MCF 10A (cell line): ENCODE measurements at regions of chr2 and their contacts with region 1.

Region 1: DNA sequence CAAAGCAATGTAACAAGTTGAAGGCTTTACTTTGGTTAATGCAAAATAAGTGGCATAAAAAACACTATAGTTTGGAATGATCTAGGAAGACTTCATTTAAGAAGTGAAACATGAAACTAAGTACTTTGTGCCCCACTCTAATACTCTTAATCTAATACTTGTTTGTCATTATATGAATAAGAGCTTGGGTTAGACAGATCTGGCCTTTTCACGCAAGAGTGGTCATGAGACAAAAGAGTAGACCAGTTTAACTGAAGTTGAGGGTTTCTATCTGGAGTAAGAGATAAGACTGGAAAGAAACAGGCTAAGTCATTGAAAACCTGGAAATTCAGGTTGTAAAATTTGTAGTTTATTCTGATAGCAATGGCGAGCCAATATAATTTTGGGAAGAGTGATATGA is 2.8 kb downstream of the SLC30A6 start:
- DNase-seq: no peak
- H3K4me3 Mint-ChIP-seq: no peak overlapping the region
- H3K27ac Mint-ChIP-seq: no peak overlapping the region
- H3K4me1 Mint-ChIP-seq: peaks cover 20% of the 10 kb centered on the region
- H3K27me3 Mint-ChIP-seq: no peaks in the 10 kb centered on the region
- CTCF ChIP-seq: no peak

Region 2: DNA sequence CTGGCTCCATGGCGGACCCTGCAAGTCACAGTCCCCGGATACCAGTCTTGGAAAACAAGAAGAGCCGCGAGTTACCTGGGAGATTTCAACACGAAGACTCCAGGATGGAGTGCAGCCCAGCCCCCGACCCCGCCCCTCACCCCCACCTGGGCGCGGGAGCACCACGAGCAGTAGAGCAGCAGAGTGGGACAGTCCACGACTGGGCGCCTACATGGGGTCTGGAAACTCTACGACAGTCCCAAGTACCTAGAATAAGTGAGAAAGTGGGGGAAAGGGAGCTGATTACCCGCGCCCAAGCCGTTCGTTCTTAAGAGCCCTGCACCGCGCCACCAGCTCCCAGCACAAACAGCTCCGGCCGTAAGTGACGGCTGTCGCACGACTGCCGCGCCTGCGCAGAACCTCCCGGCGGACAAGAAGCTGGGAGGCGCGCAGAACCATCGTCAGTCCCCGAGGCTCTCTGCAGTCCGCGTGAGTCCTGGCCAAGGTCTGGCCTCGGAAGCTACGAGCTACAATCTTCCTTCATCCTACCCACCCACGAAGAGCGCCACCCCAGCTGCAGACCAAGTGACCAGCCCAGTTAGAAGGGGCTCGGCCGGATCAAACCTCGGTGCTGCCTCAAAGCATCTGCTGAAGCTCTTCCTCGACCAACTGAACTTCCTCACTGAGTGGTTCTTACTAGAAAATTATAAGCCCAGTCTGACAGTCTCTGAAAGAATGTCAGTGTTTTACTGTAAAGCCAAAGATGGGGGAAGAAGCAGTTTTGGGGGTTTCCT is 128.9 kb before region 1 on chr2 and contains the start of gene DPY30:
- CTCF ChIA-PET with region 1: no interaction called
- POLR2A ChIA-PET with region 1: interaction called, 25 read pairs
- intact Hi-C with region 1: no loop called
- DNase-seq: peak; percentile 91
- H3K4me3 Mint-ChIP-seq: peak within 1 kb of the TSS; percentile 88
- H3K27ac Mint-ChIP-seq: peak within 1 kb of the TSS; percentile 83
- H3K4me1 Mint-ChIP-seq: no peaks in the 10 kb centered on the region
- H3K27me3 Mint-ChIP-seq: no peaks in the 10 kb centered on the region
- CTCF ChIP-seq: no peak
- total RNA-seq, gene DPY30: 52.1 and 54.7 TPM in 2 replicates

Region 3: GRCh38 chr2:32063310-32064161 is 105.0 kb before region 1 on chr2 and contains the start of gene SPAST:
- CTCF ChIA-PET with region 1: interaction called, 3 read pairs
- POLR2A ChIA-PET with region 1: interaction called, 43 read pairs
- intact Hi-C with region 1: loop called (anchors 10 kb)
- DNase-seq: peak; percentile 97
- H3K4me3 Mint-ChIP-seq: peak within 1 kb of the TSS; percentile 98
- H3K27ac Mint-ChIP-seq: peak within 1 kb of the TSS; percentile 94
- H3K4me1 Mint-ChIP-seq: peaks cover 16% of the 10 kb centered on the region
- H3K27me3 Mint-ChIP-seq: no peaks in the 10 kb centered on the region
- CTCF ChIP-seq: peak; percentile 18
- total RNA-seq, gene SPAST: 20.4 and 23.8 TPM in 2 replicates

Region 4: DNA sequence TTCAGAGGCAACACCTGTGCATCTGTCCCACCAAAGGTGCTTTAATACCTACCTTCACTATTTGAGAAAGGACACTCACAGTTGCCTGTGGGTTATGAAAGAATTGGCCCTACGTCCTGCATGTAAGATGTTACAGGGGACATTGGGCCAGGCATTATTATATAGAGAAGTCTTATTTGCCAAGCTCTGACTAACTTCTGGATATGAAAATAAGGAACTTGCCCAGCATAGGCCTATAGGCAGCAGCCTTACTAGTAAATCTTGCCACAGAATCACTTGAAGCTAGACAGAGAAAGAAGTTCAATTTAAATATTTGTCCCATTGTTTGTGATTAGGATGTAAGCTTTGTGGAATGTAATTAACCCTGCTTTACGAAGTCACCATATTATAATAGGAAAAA is 54.5 kb after region 1 on chr2:
- CTCF ChIA-PET with region 1: no interaction called
- POLR2A ChIA-PET with region 1: no interaction called
- intact Hi-C with region 1: no loop called
- DNase-seq: no peak
- H3K4me3 Mint-ChIP-seq: no peak overlapping the region
- H3K27ac Mint-ChIP-seq: no peak overlapping the region
- H3K4me1 Mint-ChIP-seq: no peaks in the 10 kb centered on the region
- H3K27me3 Mint-ChIP-seq: no peaks in the 10 kb centered on the region
- CTCF ChIP-seq: no peak

Region 5: DNA sequence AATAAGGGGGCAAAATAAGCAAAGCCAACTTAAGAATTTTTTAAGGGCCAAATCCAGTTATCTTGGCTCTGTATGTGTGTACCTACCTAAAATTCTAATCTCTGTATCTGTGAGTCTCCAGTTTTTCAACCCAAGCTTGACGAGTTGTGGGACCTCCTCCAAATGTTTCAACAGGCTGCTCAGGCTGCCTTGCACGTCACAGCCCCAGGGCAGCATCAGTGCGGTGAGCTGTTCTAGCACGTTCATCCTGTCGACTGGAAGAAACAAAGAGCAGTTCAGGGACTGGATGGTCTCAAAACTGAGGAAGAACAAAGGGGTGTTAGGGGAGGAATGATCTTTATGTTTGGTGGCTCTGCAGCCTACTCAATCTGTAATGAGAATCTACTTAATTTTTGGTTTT is 66.8 kb after region 1 on chr2:
- CTCF ChIA-PET with region 1: no interaction called
- POLR2A ChIA-PET with region 1: interaction called, 20 read pairs
- intact Hi-C with region 1: no loop called
- DNase-seq: peak; percentile 82
- H3K4me3 Mint-ChIP-seq: no peak overlapping the region
- H3K27ac Mint-ChIP-seq: peak overlapping the region; percentile 0
- H3K4me1 Mint-ChIP-seq: peaks cover 29% of the 10 kb centered on the region
- H3K27me3 Mint-ChIP-seq: no peaks in the 10 kb centered on the region
- CTCF ChIP-seq: no peak

Region 6: DNA sequence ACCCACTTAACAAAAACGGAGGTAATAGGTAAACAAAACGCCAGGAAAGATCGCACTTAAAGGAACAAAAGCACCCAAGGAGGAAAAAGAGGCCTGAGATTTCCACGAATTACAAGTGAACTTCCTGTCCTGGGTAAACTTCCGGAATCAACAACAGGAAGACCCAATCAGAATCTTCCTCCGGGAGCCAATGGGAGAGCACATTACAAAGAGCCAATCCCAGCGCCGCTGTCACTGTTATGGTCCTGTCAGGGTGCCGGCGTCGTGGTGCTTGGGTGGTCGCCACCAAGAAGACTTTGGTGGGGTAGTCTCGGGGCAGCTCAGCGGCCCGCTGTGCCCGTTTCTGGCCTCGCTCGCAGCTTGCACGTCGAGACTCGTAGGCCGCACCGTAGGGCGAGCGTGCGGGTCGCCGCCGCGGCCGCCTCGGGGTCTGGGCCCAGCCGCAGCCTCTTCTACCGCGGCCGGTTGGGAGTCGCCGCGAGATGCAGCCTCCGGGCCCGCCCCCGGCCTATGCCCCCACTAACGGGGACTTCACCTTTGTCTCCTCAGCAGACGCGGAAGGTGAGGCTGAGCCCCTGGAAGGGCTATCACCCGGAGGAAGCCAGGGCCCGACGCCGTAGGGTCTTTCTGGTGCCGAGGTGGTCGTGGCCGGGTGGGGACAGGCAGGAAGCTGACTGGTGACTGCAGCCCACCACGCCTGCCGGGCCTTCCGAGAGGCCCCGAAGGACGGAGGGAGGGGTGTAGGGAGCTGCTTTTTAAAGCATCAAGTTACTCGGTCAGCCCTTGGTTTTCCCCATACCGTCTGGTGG is 109.4 kb after region 1 on chr2 and contains the start of gene YIPF4:
- CTCF ChIA-PET with region 1: no interaction called
- POLR2A ChIA-PET with region 1: interaction called, 18 read pairs
- intact Hi-C with region 1: no loop called
- DNase-seq: peak; percentile 93
- H3K4me3 Mint-ChIP-seq: peak within 1 kb of the TSS; percentile 89
- H3K27ac Mint-ChIP-seq: peak within 1 kb of the TSS; percentile 99
- H3K4me1 Mint-ChIP-seq: peaks cover under 1% of the 10 kb centered on the region
- H3K27me3 Mint-ChIP-seq: no peaks in the 10 kb centered on the region
- CTCF ChIP-seq: no peak
- total RNA-seq, gene YIPF4: 67.6 and 90.3 TPM in 2 replicates

Region 7: DNA sequence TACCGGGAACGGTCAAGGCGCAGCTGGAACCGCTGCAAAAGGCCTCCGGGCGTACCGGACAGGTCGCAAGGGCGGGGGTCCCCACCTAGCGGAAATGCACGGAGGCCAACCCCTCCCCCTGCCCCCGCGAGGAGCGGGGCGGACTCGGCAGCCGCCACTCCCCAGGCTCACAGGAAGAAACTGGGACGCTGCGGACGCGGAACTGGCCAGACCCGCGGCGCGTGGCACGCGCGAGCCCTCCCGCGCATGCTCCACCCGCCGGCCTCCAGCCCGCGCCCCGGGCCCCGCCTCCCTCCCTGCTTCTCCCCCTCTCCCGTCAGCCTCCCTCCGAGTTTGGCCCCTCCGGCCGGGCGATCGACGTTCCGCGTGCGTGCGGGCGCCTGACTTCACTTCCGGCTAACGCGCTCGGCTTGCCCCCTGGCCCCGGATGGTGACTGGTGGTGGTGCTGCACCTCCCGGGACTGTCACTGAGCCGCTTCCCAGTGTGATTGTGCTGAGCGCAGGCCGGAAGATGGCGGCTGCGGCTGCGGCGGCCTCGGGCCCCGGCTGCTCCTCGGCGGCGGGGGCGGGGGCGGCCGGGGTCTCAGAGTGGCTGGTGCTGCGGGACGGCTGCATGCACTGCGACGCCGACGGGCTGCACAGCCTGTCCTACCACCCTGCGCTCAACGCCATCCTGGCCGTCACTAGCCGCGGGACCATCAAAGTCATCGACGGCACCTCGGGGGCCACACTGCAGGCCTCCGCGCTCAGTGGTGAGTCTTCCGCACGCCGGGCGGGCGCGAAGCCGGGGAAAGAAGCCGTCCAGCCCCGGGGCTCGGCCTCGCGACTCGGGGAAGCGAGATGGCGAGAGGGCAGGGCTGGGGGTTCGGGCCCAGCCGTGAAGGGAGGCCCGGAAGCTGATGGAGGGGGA is 188.5 kb after region 1 on chr2 and contains the start of gene BIRC6:
- CTCF ChIA-PET with region 1: no interaction called
- POLR2A ChIA-PET with region 1: interaction called, 6 read pairs
- intact Hi-C with region 1: loop called (anchors 2 kb)
- DNase-seq: peak; percentile 97
- H3K4me3 Mint-ChIP-seq: peak within 1 kb of the TSS; percentile 76
- H3K27ac Mint-ChIP-seq: peak within 1 kb of the TSS; percentile 76
- H3K4me1 Mint-ChIP-seq: peaks cover 34% of the 10 kb centered on the region
- H3K27me3 Mint-ChIP-seq: no peaks in the 10 kb centered on the region
- CTCF ChIP-seq: no peak
- total RNA-seq, gene BIRC6: 69.6 and 81.1 TPM in 2 replicates